ENCODE measurements at regions of chr14 and their contacts with region 1.

Region 1: DNA sequence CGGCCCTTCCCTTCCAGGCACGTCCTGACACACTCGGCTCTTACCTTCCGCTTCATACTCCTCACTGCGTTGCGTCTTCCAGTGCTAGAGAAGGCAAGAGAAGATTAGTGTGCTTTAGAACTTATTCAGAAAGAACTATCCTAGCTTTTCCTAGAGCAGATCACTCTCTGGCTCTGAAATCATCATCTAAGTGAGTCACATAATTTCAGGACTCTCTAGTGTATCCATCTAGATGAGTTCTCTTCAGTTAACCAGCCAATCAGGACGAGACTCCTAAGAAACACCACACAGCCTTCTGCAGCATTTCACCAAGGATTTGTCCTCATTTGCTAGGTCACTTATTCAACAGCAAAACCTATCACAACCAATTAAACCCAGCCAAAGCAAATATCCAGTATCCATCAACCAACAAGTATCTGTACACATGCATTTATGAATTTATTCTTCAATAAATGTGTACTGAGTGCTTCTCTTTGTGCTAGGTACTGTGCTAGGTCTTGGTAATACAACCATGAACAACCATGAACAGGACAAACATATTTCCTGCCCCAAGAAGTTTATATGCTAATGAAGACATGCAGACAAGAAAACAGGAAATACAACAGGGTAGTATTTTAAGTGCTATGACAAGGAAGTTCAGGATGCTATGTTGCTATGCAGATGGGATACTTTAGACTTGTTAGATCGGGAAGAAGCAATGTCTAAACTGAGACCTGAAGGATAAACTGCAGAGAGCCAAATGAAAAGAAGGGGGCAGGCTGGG is 52.1 kb downstream of the NIN start:
- DNase-seq: no peak
- H3K4me3 ChIP-seq: no peak overlapping the region
- H3K4me3 Mint-ChIP-seq: no peak overlapping the region
- H3K27ac Mint-ChIP-seq: no peak overlapping the region
- H3K4me1 ChIP-seq: no peaks in the 10 kb centered on the region
- H3K4me1 Mint-ChIP-seq: no peaks in the 10 kb centered on the region
- H3K27me3 ChIP-seq: no peaks in the 10 kb centered on the region
- H3K27me3 Mint-ChIP-seq: no peaks in the 10 kb centered on the region
- CTCF ChIP-seq: no peak

Region 2: DNA sequence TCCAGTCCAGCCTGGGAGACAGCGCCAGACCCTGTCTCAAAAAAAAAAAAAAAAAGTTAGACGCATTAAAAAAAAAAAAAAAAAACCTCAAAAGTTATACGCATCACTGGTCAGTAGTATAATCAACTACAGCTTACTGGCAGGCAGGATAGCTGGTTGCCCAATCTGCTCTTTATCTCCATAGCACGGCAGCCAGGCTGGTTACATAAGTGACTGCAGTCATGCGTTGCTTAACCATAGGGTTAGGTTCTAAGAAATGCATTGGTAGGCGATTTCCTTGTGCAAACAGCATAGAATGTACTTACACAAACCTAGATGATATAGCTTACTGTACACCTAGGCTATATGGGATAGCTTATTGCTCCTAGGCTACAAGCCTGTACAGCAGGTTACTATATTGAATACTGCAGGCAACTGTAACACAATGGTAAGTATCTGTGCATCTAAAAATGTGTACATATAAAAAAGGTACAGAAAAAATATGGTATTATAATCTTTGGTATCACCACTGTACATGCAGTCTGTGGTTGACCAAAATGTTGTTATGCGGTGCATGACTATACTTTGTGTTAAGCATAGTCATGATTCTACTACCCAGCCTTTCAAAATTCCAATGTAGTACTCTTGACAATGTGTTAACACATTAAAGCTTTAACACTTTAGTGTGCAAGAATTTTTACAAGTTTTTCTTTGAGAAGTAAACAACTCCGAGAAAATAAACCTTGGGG is 475.0 kb before region 1 on chr14:
- CTCF ChIA-PET with region 1: no interaction called
- POLR2A ChIA-PET with region 1: no interaction called
- intact Hi-C with region 1: no loop called
- DNase-seq: peak; percentile 79 to 86
- H3K4me3 ChIP-seq: no peak overlapping the region
- H3K4me3 Mint-ChIP-seq: no peak overlapping the region
- H3K27ac Mint-ChIP-seq: no peak overlapping the region
- H3K4me1 ChIP-seq: peaks cover 10% of the 10 kb centered on the region; the same call in 1 of the 2 replicates
- H3K4me1 Mint-ChIP-seq: peaks cover 6% of the 10 kb centered on the region
- H3K27me3 ChIP-seq: no peaks in the 10 kb centered on the region
- H3K27me3 Mint-ChIP-seq: no peaks in the 10 kb centered on the region
- CTCF ChIP-seq: no peak

Region 3: DNA sequence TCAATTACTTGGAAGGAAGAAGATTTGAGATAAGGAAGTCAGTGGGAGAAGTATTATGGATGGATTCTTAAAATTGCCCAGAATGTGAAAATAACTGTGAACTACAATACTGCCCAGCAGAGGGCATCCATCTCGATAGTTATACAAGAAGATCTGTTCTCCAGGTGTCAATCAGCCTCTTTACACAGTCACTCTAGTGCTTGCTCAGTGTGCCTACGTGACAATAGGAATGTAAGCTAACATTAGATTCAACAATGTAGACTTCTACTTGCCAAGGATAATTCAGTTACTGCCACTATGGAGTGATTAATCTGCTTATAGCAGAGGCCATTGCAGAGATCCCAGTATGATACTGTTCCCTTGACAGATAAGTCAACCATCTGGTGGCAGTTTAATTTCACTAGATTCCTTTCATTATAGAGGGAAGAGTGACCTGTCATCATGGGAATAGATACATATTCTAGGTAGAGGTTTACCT is 235.9 kb before region 1 on chr14:
- CTCF ChIA-PET with region 1: interaction called, 6 read pairs
- POLR2A ChIA-PET with region 1: no interaction called
- intact Hi-C with region 1: loop called (anchors 1 kb)
- DNase-seq: peak in 1 of 2 experiments; percentile 42
- H3K4me3 ChIP-seq: no peak overlapping the region
- H3K4me3 Mint-ChIP-seq: no peak overlapping the region
- H3K27ac Mint-ChIP-seq: no peak overlapping the region
- H3K4me1 ChIP-seq: peaks cover 14% of the 10 kb centered on the region; the same call in 1 of the 2 replicates
- H3K4me1 Mint-ChIP-seq: peaks cover 6% of the 10 kb centered on the region
- H3K27me3 ChIP-seq: no peaks in the 10 kb centered on the region
- H3K27me3 Mint-ChIP-seq: no peaks in the 10 kb centered on the region
- CTCF ChIP-seq: peak; percentile 36 to 50

Region 4: GRCh38 chr14:50943943-50944646 is 165.2 kb after region 1 on chr14 and contains the start of gene PYGL:
- CTCF ChIA-PET with region 1: no interaction called
- POLR2A ChIA-PET with region 1: no interaction called
- intact Hi-C with region 1: no loop called
- DNase-seq: peak; percentile 79 to 88
- H3K4me3 ChIP-seq: peak within 1 kb of the TSS; percentile 65
- H3K4me3 Mint-ChIP-seq: peak within 1 kb of the TSS; percentile 96
- H3K27ac Mint-ChIP-seq: peak within 1 kb of the TSS; percentile 77
- H3K4me1 ChIP-seq: peaks cover 6% of the 10 kb centered on the region
- H3K4me1 Mint-ChIP-seq: peaks cover 18% of the 10 kb centered on the region
- H3K27me3 ChIP-seq: no peaks in the 10 kb centered on the region
- H3K27me3 Mint-ChIP-seq: no peaks in the 10 kb centered on the region
- CTCF ChIP-seq: no peak
- total RNA-seq, gene PYGL: 80.8 and 98.1 TPM in 2 replicates

Region 5: DNA sequence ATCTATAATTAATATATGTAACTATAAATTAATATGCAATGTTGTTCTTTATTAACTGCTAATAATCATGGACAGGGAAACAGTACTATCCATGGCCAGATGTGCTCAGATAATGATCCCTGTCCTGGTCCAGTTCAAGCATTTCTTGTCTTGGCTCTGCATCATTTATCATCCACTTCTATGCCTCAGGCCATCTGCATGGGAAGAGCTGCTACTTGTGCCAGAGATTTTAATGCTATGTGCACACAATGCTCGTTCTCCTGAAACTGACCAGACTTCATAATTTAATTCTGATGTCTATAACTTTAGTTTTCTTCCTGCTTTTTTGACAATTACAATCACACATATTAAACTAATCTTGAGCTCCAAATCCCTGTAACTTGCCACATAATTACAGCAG is 450.0 kb after region 1 on chr14:
- CTCF ChIA-PET with region 1: no interaction called
- POLR2A ChIA-PET with region 1: no interaction called
- intact Hi-C with region 1: no loop called
- DNase-seq: no peak
- H3K4me3 ChIP-seq: no peak overlapping the region
- H3K4me3 Mint-ChIP-seq: no peak overlapping the region
- H3K27ac Mint-ChIP-seq: no peak overlapping the region
- H3K4me1 ChIP-seq: no peaks in the 10 kb centered on the region
- H3K4me1 Mint-ChIP-seq: no peaks in the 10 kb centered on the region
- H3K27me3 ChIP-seq: no peaks in the 10 kb centered on the region
- H3K27me3 Mint-ChIP-seq: no peaks in the 10 kb centered on the region
- CTCF ChIP-seq: no peak